Activated CD4-positive, alpha-beta T cell treated with anti-CD3 and anti-CD28 coated beads, Interleukin-2, amount 10 ng/mL, durations not matched to agents 24 days and 14 days (primary cell): ENCODE measurements at regions of chr14 and their contacts with region 1.

Region 1: GRCh38 chr14:35416108-35416750 is 11.7 kb upstream of the NFKBIA start:
- DNase-seq: peak; percentile 90
- H3K4me3 Mint-ChIP-seq: peak overlapping the region; percentile 78
- H3K27ac Mint-ChIP-seq: peak overlapping the region; percentile 95
- H3K4me1 Mint-ChIP-seq: peaks cover 51% of the 10 kb centered on the region
- H3K27me3 Mint-ChIP-seq: peaks cover 4% of the 10 kb centered on the region

Region 2: DNA sequence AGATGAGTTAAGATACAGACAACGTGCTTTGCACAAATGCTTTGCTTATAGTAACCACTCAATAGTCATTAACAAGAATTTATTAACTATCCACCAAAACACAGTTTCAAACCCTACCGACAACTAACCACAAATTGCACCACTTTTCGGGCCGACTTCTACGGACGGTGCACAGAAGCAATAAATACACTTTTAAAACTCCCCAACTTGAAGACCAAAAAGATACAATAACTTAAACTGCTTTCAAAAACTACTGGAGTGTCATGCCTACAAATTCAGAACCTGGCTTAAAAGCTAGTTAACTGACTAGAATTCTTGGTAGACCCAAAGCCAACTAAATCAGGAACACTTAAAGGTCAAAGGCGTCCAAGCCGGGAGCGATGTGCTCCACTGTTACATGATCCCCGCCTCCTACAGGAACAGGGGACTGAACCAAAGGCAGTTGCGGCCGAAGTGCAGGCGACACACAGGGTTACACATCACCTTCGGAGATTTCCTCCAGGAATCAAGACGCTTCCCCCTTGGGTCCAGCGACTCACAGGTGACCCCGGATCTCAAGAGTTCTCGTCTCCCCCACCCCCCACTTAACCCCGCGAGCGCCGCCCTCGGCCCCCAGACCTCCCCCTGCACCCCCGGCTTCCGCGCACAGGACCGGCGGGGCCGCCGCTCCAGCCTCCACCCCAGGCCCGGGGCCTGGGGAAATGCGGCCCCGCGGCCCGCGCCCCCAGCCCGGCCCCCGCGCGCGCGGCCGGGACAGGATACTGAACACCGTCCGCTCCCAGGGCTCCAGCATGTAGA is 954.7 kb before region 1 on chr14:
- intact Hi-C with region 1: loop called (anchors 10 kb)
- DNase-seq: peak; percentile 80
- H3K4me3 Mint-ChIP-seq: peak overlapping the region; percentile 92
- H3K27ac Mint-ChIP-seq: peak overlapping the region; percentile 93
- H3K4me1 Mint-ChIP-seq: peaks cover 19% of the 10 kb centered on the region
- H3K27me3 Mint-ChIP-seq: no peaks in the 10 kb centered on the region

Region 3: DNA sequence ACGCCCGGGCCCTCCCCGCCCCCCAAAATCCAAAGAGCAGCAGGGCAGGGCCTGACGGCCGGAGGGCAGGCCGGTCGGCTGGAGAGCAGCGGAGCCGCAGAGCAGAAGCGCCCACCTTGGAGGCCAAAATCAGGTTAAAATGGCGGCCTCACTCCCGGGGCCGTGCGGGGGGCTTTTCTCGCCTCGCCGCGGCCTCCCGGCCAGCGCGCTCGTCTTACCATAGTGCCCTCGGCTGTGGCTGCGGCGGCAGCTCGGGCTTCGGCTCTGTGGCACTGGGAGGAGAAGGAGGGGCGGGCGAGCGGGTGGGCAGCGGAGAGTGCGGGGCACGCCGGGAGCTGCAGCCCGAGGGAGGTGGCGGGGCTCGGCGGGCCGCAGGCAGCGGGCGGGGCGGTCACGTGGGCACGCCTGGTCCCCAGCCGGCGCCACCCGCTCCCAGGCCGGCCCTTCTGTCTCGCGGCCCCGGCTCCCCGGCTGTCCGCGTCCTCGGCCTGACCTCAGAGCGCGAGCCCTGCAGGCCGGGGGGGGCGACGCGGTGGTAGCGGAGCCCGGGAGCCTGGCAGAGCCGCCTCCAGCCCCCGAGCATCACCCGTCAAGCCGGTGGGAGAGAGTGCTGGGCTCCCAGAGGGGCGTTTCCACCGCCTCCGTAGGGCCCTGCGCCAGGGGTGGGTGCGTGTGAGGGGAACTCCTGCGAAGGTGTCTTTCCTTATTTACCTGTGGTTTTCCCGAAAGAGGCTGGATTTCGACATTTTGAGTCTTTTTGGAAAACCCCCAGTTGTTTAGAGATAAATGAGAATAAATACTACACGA is 701.7 kb before region 1 on chr14 and contains the start of gene CFL2:
- intact Hi-C with region 1: loop called (anchors 10 kb)
- DNase-seq: peak; percentile 88
- H3K4me3 Mint-ChIP-seq: peak within 1 kb of the TSS; percentile 87
- H3K27ac Mint-ChIP-seq: peak within 1 kb of the TSS; percentile 86
- H3K4me1 Mint-ChIP-seq: peaks cover 21% of the 10 kb centered on the region
- H3K27me3 Mint-ChIP-seq: peaks cover 10% of the 10 kb centered on the region
- total RNA-seq, gene CFL2: 4.9 and 6.0 TPM in 2 replicates

Region 4: DNA sequence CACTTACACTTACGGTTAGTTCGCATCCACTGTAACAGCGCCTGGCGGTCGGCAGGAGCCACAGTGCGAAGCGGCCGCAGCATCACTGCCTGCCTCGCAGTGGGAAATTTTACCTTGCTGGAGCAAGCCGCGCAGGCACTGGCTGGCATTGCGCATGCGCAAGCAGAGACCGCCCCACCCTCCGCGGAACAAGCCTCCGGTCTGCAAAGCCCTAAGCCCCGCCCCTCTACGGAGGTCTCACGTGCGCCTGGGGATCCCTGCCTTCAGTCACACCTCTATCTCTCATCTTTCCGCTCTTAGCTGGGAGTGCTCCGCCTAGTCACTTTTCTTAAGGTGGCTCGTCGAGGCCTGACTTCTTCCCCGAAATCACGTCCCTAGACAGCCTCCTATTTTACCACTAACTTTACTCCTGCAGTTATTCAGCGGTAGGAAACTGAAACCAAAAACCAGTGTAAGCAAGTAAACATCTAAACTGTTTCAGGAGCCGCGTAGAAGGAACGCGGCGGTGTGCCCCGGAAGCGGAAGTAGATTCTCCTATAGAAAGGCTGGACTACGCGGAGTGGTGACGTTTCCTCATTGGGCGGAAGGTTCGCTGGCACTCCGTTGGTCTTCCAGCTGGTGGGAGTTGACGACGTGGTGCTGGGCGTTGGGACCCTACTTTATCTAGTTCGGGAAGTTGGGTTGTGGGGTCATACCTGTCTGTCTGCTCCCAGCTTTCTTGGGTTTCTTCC is 433.6 kb before region 1 on chr14 and contains the start of gene SRP54:
- intact Hi-C with region 1: loop called (anchors 5 kb)
- DNase-seq: peak; percentile 100
- H3K4me3 Mint-ChIP-seq: no peak within 1 kb of the TSS
- H3K27ac Mint-ChIP-seq: no peak within 1 kb of the TSS
- H3K4me1 Mint-ChIP-seq: peaks cover 17% of the 10 kb centered on the region
- H3K27me3 Mint-ChIP-seq: no peaks in the 10 kb centered on the region
- total RNA-seq, gene SRP54: 73.6 and 73.8 TPM in 2 replicates

Region 5: GRCh38 chr14:35121887-35122695 is 294.1 kb before region 1 on chr14 and contains the starts of genes PPP2R3C and PRORP:
- intact Hi-C with region 1: loop called (anchors 1 kb)
- DNase-seq: peak; percentile 97
- H3K4me3 Mint-ChIP-seq: peak within 1 kb of the TSS; percentile 82
- H3K27ac Mint-ChIP-seq: peak within 1 kb of the TSS; percentile 100
- H3K4me1 Mint-ChIP-seq: peaks cover 56% of the 10 kb centered on the region
- H3K27me3 Mint-ChIP-seq: no peaks in the 10 kb centered on the region
- total RNA-seq, gene PPP2R3C: 51.6 and 58.1 TPM in 2 replicates
- total RNA-seq, gene PRORP: 35.6 and 41.1 TPM in 2 replicates

Region 6: GRCh38 chr14:35229495-35230089 is 186.6 kb before region 1 on chr14:
- intact Hi-C with region 1: loop called (anchors 1 kb)
- DNase-seq: no peak
- H3K4me3 Mint-ChIP-seq: no peak overlapping the region
- H3K27ac Mint-ChIP-seq: peak overlapping the region; percentile 21
- H3K4me1 Mint-ChIP-seq: peaks cover 18% of the 10 kb centered on the region
- H3K27me3 Mint-ChIP-seq: no peaks in the 10 kb centered on the region

Region 7: GRCh38 chr14:35247777-35248475 is 168.3 kb before region 1 on chr14:
- intact Hi-C with region 1: no loop called
- DNase-seq: no peak
- H3K4me3 Mint-ChIP-seq: no peak overlapping the region
- H3K27ac Mint-ChIP-seq: no peak overlapping the region
- H3K4me1 Mint-ChIP-seq: peaks cover 24% of the 10 kb centered on the region
- H3K27me3 Mint-ChIP-seq: no peaks in the 10 kb centered on the region

Region 8: GRCh38 chr14:35355981-35356841 is 60.0 kb before region 1 on chr14:
- intact Hi-C with region 1: loop called (anchors 1 kb)
- DNase-seq: peak; percentile 64
- H3K4me3 Mint-ChIP-seq: peak overlapping the region; percentile 9
- H3K27ac Mint-ChIP-seq: peak overlapping the region; percentile 87
- H3K4me1 Mint-ChIP-seq: peaks cover 26% of the 10 kb centered on the region
- H3K27me3 Mint-ChIP-seq: no peaks in the 10 kb centered on the region

Region 9: DNA sequence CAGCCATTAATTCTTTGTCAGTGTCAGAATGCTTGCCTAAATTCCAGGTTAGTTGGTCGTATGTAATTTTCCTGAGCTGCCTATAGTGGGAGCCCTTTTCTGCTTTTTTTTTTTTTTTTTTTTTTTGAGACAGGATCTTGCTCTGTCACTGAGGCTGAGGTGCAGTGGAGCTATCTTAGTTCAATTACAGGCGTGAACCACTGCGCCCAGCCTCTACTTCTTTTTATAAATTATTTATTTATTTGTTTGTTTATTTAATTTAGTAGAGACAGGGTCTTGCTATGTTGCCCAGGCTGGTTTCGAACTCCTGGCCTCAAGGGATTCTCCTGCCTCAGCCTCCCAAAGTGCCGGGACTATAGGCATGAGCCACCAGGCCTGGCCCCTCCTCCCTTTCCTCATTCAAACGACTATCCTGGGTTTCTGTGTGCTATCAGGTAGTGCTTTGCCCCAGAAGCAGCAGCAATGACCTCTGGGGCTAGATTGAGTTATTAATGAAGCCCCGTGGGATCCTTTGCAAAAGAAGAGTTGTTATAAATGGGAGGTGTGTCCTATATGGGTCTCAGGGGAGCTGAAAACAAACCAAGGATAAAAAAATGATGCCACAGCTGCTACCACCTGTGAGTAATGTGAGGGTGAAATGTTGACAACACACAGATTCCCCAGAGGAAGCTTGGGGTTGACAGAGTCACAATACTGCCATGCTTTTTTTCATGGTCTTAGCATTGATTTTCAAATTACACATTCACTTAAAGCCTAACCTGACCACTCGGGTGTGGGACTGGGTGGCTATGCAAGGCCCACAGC is 22.9 kb after region 1 on chr14:
- intact Hi-C with region 1: no loop called
- DNase-seq: no peak
- H3K4me3 Mint-ChIP-seq: no peak overlapping the region
- H3K27ac Mint-ChIP-seq: no peak overlapping the region
- H3K4me1 Mint-ChIP-seq: peaks cover 7% of the 10 kb centered on the region
- H3K27me3 Mint-ChIP-seq: peaks cover 5% of the 10 kb centered on the region